ENCODE measurements at regions of chr2 and their contacts with region 1.

Region 1: DNA sequence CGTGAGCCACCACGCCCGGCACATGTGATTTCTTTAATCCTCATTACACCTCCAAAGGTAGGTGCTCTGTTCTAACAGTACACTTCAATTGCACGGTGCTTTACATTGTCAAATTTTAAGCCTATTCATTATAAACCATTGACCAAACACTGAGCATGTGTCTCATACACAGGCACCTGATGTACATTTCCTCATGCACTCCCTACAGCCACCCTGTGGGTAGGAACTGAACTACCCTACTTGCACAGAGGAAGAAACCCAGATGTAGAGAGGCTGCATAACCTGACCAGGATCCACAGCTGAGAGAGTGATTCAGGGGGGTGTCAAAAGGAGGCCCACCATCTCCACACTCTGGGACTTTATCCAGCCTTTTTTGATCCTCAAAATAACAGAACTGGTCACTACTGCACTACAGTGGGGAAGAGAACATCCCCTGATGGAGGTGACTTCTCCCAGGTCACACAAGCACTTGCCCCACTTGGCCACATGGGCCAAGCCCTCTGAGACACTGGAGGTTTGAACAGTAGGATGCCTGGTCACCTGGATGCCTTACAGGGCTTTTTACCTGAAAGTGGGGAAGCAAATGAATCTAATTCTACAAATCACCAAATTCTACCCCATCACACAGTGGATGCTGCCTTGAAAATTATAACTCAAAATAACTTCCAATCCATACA is 6.9 kb upstream of the DPYSL5 start:
- DNase-seq: no peak
- H3K4me3 ChIP-seq: no peak overlapping the region
- H3K4me1 ChIP-seq: no peaks in the 10 kb centered on the region
- H3K27me3 ChIP-seq: peaks cover 42% of the 10 kb centered on the region

Region 2: GRCh38 chr2:26942543-26943295 is 101.6 kb after region 1 on chr2:
- in situ Hi-C with region 1: loop called (anchors 5 kb)
- DNase-seq: peak; percentile 77 to 81
- H3K4me3 ChIP-seq: no peak overlapping the region
- H3K4me1 ChIP-seq: no peaks in the 10 kb centered on the region
- H3K27me3 ChIP-seq: no peaks in the 10 kb centered on the region

Region 3: DNA sequence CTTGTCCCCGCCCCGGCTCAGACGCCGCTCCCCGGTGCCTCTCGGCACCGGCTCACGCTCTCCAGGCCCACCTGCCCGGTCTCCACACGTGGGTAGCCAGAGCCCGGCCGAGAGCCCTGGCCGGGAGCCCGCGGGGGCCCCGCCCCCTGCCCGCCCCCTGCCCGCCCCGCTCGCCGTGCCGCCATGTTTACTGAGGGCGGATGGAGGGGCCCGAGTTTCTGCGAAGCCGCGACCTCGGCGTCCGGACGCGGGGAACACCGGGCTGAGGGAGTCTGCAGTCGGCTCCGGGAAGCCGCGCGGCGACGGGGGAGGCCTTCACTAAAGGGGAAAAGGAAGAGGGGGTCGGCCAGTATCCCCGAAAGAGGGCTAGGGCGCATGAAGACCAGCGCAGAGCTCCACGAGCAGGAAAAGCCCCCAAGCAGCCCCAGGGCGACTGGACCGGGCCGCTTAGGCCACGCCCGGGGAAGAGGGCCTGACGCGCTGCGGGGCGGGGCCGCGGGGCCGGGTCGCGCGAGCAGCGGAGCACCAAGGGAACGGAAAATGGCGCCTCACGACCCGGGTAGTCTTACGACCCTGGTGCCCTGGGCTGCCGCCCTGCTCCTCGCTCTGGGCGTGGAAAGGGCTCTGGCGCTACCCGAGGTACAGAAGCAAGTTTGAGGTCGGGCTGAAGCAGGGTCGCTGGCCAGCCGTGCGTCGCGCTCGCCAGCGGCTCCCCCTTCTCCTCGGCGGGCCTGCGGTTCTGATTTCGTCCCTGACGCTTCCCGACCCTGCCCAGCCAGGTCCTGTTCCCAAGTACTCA is 371.0 kb after region 1 on chr2 and contains the starts of genes ATRAID and SLC5A6:
- in situ Hi-C with region 1: no loop called
- DNase-seq: peak; percentile 85 to 89
- H3K4me3 ChIP-seq: peak within 1 kb of the TSS; percentile 73
- H3K4me1 ChIP-seq: peaks cover 31% of the 10 kb centered on the region
- H3K27me3 ChIP-seq: no peaks in the 10 kb centered on the region